ENCODE measurements at regions of chr19 and their contacts with region 1.

Region 1: GRCh38 chr19:35162471-35163326 is 8.2 kb downstream of the FXYD5 start:
- DNase-seq: no peak
- H3K4me3 ChIP-seq: no peak overlapping the region
- H3K27ac ChIP-seq: no peak overlapping the region
- H3K4me1 ChIP-seq: no peaks in the 10 kb centered on the region
- H3K27me3 ChIP-seq: no peaks in the 10 kb centered on the region
- CTCF ChIP-seq: no peak

Region 2: GRCh38 chr19:35240327-35240726 is 77.6 kb after region 1 on chr19:
- intact Hi-C with region 1: loop called (anchors 2 kb)
- DNase-seq: no peak
- H3K4me3 ChIP-seq: no peak overlapping the region
- H3K27ac ChIP-seq: no peak overlapping the region
- H3K4me1 ChIP-seq: no peaks in the 10 kb centered on the region
- H3K27me3 ChIP-seq: peaks cover 0 to 20% of the 10 kb centered on the region in 2 donors
- CTCF ChIP-seq: no peak